Breast epithelium (tissue), 4 donors: ENCODE measurements at regions of chr5 and their contacts with region 1.

Region 1: DNA sequence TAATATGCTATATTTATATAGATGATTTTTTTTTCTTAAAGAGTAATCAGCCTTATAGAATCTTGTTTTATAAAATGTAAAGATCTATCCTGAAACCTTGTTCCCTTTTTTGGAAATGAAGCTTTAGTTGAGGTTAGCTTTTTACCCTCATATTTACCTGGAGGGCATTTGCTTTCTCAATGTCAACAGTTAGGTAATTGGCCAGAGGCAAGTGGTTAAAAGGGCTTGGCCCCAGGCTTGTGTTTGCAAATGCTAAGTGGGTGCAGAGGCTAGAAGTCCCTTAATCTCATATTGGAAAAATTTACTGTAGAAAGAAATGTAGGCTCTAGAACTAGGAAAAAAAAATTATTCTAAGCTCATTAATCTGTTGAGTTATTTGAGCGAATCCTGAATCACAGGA is 9.0 kb downstream of the ISL1 start:
- DNase-seq: no peak
- H3K4me3 ChIP-seq: no peak overlapping the region
- H3K27ac ChIP-seq: no peak overlapping the region
- H3K4me1 ChIP-seq: peaks cover 0 to 13% of the 10 kb centered on the region in 2 donors
- H3K27me3 ChIP-seq: peaks cover 4 to 92% of the 10 kb centered on the region in 2 donors
- CTCF ChIP-seq: no peak
- POLR2A ChIP-seq: no peak

Region 2: GRCh38 chr5:51138164-51138563 is 254.1 kb before region 1 on chr5:
- intact Hi-C with region 1: no loop called
- DNase-seq: no peak
- H3K4me3 ChIP-seq: no peak overlapping the region
- H3K27ac ChIP-seq: no peak overlapping the region
- H3K4me1 ChIP-seq: no peaks in the 10 kb centered on the region
- H3K27me3 ChIP-seq: no peaks in the 10 kb centered on the region
- CTCF ChIP-seq: no peak
- POLR2A ChIP-seq: no peak

Region 3: GRCh38 chr5:51404256-51404655 is 12.0 kb after region 1 on chr5:
- intact Hi-C with region 1: no loop called
- DNase-seq: no peak
- H3K4me3 ChIP-seq: no peak overlapping the region
- H3K27ac ChIP-seq: no peak overlapping the region
- H3K4me1 ChIP-seq: no peaks in the 10 kb centered on the region
- H3K27me3 ChIP-seq: peaks cover 3 to 6% of the 10 kb centered on the region in 2 donors
- CTCF ChIP-seq: no peak
- POLR2A ChIP-seq: no peak

Region 4: GRCh38 chr5:51433052-51433710 is 40.9 kb after region 1 on chr5:
- intact Hi-C with region 1: loop called (anchors 2 kb)
- DNase-seq: no peak
- H3K4me3 ChIP-seq: no peak overlapping the region
- H3K27ac ChIP-seq: no peak overlapping the region
- H3K4me1 ChIP-seq: no peaks in the 10 kb centered on the region
- H3K27me3 ChIP-seq: no peaks in the 10 kb centered on the region
- CTCF ChIP-seq: no peak
- POLR2A ChIP-seq: no peak